Activated naive CD8-positive, alpha-beta T cell treated with anti-CD3 and anti-CD28 coated beads, Interleukin-2, amount 10 ng/mL, durations not matched to agents 7 days and 5 days (primary cell): ENCODE measurements at regions of chr6 and their contacts with region 1.

Region 1: DNA sequence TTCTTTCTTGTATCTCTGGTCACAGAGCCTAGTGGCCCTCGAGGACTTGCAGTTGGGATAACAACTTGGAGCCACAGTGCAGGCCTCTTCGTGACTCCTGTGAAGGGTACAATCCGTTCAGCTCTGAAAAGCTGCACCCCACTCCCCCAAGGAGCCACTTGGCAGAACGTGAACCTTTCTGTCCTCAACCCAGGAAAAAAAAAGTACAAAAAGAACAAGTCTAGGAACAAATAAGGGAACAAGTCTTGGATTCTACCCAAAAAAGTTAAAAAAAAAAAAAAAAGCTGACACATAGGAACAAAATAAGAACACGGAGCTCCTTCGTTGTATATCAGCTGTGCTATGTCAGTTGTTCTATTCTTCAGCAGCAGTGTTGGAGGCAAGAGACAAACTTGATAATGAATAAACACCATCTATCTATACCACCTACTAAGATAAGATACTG is 77.9 kb upstream of the TULP1 start:
- DNase-seq: no peak
- ATAC-seq: no peak
- H3K4me3 Mint-ChIP-seq: no peak overlapping the region
- H3K27ac Mint-ChIP-seq: peak overlapping the region; percentile 27
- H3K4me1 Mint-ChIP-seq: peaks cover 39% of the 10 kb centered on the region
- H3K27me3 Mint-ChIP-seq: no peaks in the 10 kb centered on the region

Region 2: DNA sequence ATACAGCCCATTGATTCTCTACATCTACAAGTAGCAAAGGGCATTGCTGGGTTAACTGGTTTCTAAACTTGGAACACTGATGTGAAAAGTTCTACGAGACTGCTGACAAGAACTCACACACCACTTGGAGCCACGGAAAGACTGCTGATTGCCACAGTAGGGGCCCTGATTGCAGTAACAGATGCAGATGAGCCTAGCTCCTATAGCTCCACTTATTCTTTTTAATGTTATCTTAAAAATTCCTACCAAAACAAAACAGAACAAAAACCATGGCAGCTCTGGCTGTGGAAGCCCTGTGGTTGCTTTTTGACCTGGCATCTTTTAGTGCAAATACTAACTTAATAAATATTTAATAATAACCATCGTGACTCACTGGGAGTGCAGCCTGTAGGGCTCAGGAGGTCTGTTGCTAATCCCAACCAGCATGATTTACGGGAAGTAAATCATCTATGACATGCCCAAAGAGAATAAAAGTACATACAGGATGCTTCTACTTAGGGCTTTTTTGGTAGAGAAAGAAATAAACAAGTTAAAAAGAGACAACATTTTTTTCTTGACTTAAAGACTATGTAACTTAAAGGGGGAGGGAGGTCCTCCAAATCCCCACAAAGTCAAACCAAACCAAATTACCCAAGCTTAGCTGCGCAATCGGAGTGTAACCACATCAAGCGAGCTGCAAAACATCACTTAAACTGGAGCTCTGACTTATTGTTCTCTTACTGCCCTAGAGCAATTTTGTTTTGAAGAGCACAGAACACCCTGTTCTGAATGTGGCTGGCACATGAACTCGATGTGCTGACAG is 10.9 kb after region 1 on chr6:
- POLR2A ChIA-PET with region 1: interaction called, 20 read pairs
- DNase-seq: peak; percentile 47
- ATAC-seq: peak; percentile 88
- H3K4me3 Mint-ChIP-seq: peak overlapping the region; percentile 85
- H3K27ac Mint-ChIP-seq: peak overlapping the region; percentile 98
- H3K4me1 Mint-ChIP-seq: peaks cover 46% of the 10 kb centered on the region
- H3K27me3 Mint-ChIP-seq: no peaks in the 10 kb centered on the region

Region 3: GRCh38 chr6:35620706-35621105 is 30.1 kb after region 1 on chr6:
- POLR2A ChIA-PET with region 1: no interaction called
- DNase-seq: no peak
- ATAC-seq: no peak
- H3K4me3 Mint-ChIP-seq: no peak overlapping the region
- H3K27ac Mint-ChIP-seq: no peak overlapping the region
- H3K4me1 Mint-ChIP-seq: peaks cover 10% of the 10 kb centered on the region
- H3K27me3 Mint-ChIP-seq: no peaks in the 10 kb centered on the region